ENCODE measurements at regions of chr3 and their contacts with region 1.

Region 1: GRCh38 chr3:159260049-159260662 is 458.3 kb downstream of the MFSD1 start:
- DNase-seq: no peak
- H3K4me3 ChIP-seq: no peak overlapping the region
- H3K27ac ChIP-seq: no peak overlapping the region
- H3K4me1 ChIP-seq: no peaks in the 10 kb centered on the region
- H3K27me3 ChIP-seq: no peaks in the 10 kb centered on the region
- CTCF ChIP-seq: peak in 2 of 3 experiments; percentile 56 to 76; a peak in 3 of 4 replicates
- EP300 ChIP-seq: no peak
- POLR2A ChIP-seq: no peak
- RAD21 ChIP-seq: peak; percentile 82 to 87

Region 2: DNA sequence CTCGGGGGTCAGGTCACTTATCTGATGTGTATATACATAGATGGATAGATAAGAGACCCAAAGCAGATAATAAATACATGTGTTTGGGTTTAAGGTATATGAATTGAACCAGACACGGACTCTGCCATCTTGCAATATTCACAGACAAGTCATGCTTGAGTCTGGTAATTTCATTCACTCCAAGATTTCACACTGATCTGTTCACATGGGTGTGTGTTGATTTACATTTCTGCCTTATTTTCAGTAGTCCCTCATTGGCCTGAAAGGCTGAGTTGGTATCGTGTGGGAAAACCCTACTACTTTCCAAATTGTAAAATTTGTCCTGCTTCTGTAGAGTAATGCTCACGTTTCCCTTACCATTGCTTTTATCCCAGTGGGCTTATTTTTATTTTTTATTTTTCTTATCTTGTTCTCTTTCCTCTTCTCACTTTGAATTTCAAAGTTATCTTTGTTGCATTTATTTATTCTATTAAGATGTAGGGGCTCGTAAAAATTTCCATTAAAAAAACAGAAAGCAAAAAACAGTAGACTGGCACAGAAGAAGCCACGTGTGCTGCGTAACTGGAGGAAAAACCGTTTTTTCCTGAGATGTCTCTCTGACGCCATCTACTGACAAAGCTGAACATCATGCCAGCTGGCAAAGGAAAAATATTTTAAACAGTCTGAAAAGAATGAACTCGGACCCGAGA is 469.1 kb before region 1 on chr3:
- CTCF ChIA-PET with region 1: interaction called, 28 read pairs
- POLR2A ChIA-PET with region 1: no interaction called
- DNase-seq: no peak
- H3K4me3 ChIP-seq: no peak overlapping the region
- H3K27ac ChIP-seq: no peak overlapping the region
- H3K4me1 ChIP-seq: no peaks in the 10 kb centered on the region
- H3K27me3 ChIP-seq: no peaks in the 10 kb centered on the region
- CTCF ChIP-seq: peak; percentile 20 to 87 (median 76)
- EP300 ChIP-seq: no peak
- POLR2A ChIP-seq: no peak
- RAD21 ChIP-seq: peak; percentile 86 to 88

Region 3: DNA sequence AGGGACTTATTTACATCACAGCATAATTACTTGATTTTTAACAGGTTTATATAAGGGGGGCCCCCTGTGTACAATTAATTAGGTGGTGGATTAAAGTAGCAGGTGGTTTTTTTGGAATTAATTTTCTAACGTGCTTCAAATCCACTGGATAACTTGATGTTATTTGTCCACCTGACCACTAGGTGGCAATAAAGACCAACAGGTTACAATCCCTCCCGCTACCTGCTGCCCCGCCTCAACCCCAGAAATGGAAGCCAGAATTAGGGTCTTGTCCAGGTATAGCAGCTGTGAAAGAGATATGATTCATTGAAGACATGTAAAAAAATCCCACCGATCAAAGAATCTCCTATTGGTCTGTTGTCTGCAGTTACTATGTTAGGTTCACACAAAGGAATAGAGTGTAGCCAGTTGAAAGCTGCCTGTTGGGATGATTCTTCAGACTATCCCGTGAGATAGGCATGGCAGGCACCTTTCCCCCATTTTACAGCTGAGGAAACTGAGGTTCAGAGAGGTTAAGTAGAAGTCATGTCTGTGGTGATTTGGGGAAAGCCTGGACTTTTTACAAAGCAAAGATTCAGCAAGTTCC is 414.3 kb before region 1 on chr3:
- CTCF ChIA-PET with region 1: interaction called, 195 read pairs
- POLR2A ChIA-PET with region 1: no interaction called
- DNase-seq: peak in 1 of 2 experiments; percentile 15
- H3K4me3 ChIP-seq: no peak overlapping the region
- H3K27ac ChIP-seq: no peak overlapping the region
- H3K4me1 ChIP-seq: no peaks in the 10 kb centered on the region
- H3K27me3 ChIP-seq: no peaks in the 10 kb centered on the region
- CTCF ChIP-seq: peak; percentile 45 to 70 (median 62)
- EP300 ChIP-seq: no peak
- POLR2A ChIP-seq: no peak
- RAD21 ChIP-seq: peak; percentile 90

Region 4: DNA sequence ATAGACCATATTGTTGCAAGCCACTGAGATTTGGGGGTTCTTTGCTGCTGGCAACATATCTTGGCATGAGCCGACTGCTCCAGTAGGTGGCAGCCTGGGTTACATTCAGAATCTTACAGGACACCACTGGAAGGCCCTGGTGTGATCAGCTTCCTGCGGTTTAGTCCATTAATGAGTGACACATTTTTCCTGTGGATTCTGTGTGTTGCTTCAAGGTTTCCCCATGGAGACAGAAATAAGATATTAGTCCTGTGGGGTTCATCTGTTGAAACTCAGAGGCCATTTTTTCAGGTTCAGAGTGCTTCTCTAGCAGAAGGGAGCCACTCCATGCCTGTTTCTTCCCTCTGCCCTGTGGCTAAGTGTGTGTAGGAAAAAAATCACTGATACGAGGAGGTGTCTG is 342.1 kb before region 1 on chr3:
- CTCF ChIA-PET with region 1: interaction called, 41 read pairs
- POLR2A ChIA-PET with region 1: no interaction called
- DNase-seq: peak; percentile 29 to 74
- H3K4me3 ChIP-seq: no peak overlapping the region
- H3K27ac ChIP-seq: no peak overlapping the region
- H3K4me1 ChIP-seq: no peaks in the 10 kb centered on the region
- H3K27me3 ChIP-seq: no peaks in the 10 kb centered on the region
- CTCF ChIP-seq: peak; percentile 76 to 90 (median 78)
- EP300 ChIP-seq: no peak
- POLR2A ChIP-seq: no peak
- RAD21 ChIP-seq: peak; percentile 86 to 90

Region 5: DNA sequence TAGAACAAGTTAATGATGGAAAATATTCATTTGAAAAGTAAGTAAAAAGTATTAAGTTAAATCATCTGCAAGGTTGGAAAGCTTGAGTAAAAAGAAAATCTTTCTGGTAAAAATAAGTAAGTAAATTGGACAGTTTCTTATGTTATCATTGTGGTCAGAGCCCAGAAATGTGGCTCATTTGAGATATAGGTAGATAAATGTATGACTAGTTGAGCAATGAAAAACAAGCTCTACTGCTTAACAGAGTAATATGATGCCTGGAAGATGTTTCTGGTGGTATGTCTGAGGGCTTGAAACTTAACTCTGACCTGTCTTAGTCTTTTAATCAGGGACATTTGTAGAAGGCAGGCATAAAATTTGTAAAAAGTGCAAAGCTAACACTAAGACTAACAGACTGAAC is 14.3 kb before region 1 on chr3:
- CTCF ChIA-PET with region 1: interaction called, 15 read pairs
- POLR2A ChIA-PET with region 1: no interaction called
- DNase-seq: no peak
- H3K4me3 ChIP-seq: no peak overlapping the region
- H3K27ac ChIP-seq: no peak overlapping the region
- H3K4me1 ChIP-seq: no peaks in the 10 kb centered on the region
- H3K27me3 ChIP-seq: no peaks in the 10 kb centered on the region
- CTCF ChIP-seq: no peak
- EP300 ChIP-seq: no peak
- POLR2A ChIP-seq: no peak
- RAD21 ChIP-seq: no peak

Region 6: DNA sequence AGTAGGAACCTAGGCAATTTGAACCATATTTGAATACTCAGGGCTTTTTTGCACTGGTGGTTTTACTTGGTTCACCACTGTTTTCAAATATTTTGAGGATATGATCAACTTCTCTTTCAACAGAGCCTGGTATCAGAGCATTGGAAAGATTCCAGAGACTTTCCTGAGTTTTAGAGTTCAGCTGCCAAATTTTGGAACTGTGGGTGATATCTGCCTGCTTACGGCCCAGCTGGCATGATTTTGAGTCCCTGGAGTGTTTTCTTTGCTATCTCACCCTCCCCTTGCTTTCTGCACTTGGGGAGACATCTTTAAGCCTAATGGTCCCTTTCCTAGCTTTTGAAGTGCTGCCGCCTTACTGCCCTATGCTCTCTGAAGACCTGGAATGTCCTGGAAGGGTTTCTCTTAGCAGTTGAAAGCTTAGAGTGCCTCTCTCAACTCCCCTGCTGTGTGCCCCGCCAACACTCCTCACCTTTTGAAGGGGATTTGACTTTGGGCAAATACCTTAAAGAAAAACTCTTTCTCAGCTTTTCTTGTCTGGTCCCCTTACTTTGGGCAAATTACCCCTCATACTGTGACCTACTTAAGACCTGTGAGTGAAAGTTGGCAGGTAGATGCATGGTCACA is 80.8 kb after region 1 on chr3:
- CTCF ChIA-PET with region 1: no interaction called
- POLR2A ChIA-PET with region 1: no interaction called
- DNase-seq: no peak
- H3K4me3 ChIP-seq: no peak overlapping the region
- H3K27ac ChIP-seq: no peak overlapping the region
- H3K4me1 ChIP-seq: peaks cover 0 to 3% (median 0%) of the 10 kb centered on the region in 4 experiments; a peak in 1 of 7 replicates
- H3K27me3 ChIP-seq: no peaks in the 10 kb centered on the region
- CTCF ChIP-seq: no peak
- EP300 ChIP-seq: no peak
- POLR2A ChIP-seq: no peak
- RAD21 ChIP-seq: no peak

Region 7: DNA sequence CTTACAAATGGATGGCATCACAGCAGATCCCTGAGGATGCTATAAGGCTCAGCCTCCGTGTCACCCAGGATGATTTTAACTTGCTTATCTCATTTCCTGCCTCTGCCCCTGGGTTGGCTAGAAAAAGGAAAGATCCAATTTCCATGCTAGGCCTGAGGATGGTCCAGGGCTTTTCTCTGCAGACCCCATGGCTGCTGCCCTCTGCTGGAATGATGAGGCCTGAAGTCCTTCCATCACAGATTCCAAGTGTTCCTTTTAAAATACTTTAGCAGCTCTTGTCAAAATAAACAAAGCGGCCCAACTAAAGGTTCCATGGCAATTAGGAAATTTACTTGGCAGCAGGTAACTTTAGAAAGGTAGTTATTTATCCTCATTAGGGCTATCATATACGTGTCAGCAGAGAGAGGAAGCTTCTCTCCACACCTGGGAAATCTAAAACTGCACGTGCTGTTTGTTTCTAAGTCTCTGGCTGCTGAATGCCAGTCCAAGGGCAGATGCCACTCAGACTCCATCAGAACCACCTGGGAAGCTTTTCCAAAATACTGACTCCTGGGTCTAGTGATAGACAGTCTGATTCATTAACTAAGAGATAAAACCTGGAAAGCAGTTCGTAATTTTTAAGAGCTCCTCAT is 326.5 kb after region 1 on chr3:
- CTCF ChIA-PET with region 1: interaction called, 69 read pairs
- POLR2A ChIA-PET with region 1: no interaction called
- DNase-seq: peak; percentile 41 to 68
- H3K4me3 ChIP-seq: no peak overlapping the region
- H3K27ac ChIP-seq: no peak overlapping the region
- H3K4me1 ChIP-seq: peaks cover 0 to 6% (median 3%) of the 10 kb centered on the region in 4 experiments; a peak in 3 of 7 replicates
- H3K27me3 ChIP-seq: no peaks in the 10 kb centered on the region
- CTCF ChIP-seq: peak; percentile 71 to 84 (median 81)
- EP300 ChIP-seq: no peak
- POLR2A ChIP-seq: no peak
- RAD21 ChIP-seq: peak; percentile 84

Region 8: GRCh38 chr3:159804726-159805410 is 544.7 kb after region 1 on chr3:
- CTCF ChIA-PET with region 1: interaction called, 76 read pairs
- POLR2A ChIA-PET with region 1: no interaction called
- DNase-seq: peak; percentile 49 to 61
- H3K4me3 ChIP-seq: no peak overlapping the region
- H3K27ac ChIP-seq: no peak overlapping the region
- H3K4me1 ChIP-seq: peaks cover 0 to 3% (median 1%) of the 10 kb centered on the region in 4 experiments; a peak in 1 of 7 replicates
- H3K27me3 ChIP-seq: peaks cover 3 to 18% (median 11%) of the 10 kb centered on the region in 4 experiments; a peak in 6 of 7 replicates
- CTCF ChIP-seq: peak; percentile 70 to 95 (median 91)
- EP300 ChIP-seq: no peak
- POLR2A ChIP-seq: no peak
- RAD21 ChIP-seq: peak; percentile 99

Measured in H1 (cell line).